ENCODE measurements at regions of chr6 and their contacts with region 1.

Region 1: GRCh38 chr6:13574149-13574570 is 241 bp upstream of the SIRT5 start:
- DNase-seq: peak; percentile 96
- H3K4me3 ChIP-seq: peak overlapping the region; percentile 54 to 88 (median 75)
- H3K27ac ChIP-seq: peak overlapping the region; percentile 80
- H3K4me1 ChIP-seq: peaks cover 8% of the 10 kb centered on the region
- H3K27me3 ChIP-seq: no peaks in the 10 kb centered on the region
- CTCF ChIP-seq: peak in 1 of 2 donors; percentile 40
- POLR2A ChIP-seq: peak; percentile 72

Region 2: GRCh38 chr6:13336553-13336952 is 237.6 kb before region 1 on chr6:
- CTCF ChIA-PET with region 1: interaction called, 36 read pairs
- POLR2A ChIA-PET with region 1: interaction called, 3 read pairs
- dilution Hi-C with region 1: loop called (anchors 25 kb)
- intact Hi-C with region 1: loop called (anchors 1 kb)
- DNase-seq: peak; percentile 85
- H3K4me3 ChIP-seq: no peak overlapping the region
- H3K27ac ChIP-seq: no peak overlapping the region
- H3K4me1 ChIP-seq: peaks cover 13% of the 10 kb centered on the region
- H3K27me3 ChIP-seq: no peaks in the 10 kb centered on the region
- CTCF ChIP-seq: peak; percentile 82 to 85
- POLR2A ChIP-seq: no peak

Region 3: DNA sequence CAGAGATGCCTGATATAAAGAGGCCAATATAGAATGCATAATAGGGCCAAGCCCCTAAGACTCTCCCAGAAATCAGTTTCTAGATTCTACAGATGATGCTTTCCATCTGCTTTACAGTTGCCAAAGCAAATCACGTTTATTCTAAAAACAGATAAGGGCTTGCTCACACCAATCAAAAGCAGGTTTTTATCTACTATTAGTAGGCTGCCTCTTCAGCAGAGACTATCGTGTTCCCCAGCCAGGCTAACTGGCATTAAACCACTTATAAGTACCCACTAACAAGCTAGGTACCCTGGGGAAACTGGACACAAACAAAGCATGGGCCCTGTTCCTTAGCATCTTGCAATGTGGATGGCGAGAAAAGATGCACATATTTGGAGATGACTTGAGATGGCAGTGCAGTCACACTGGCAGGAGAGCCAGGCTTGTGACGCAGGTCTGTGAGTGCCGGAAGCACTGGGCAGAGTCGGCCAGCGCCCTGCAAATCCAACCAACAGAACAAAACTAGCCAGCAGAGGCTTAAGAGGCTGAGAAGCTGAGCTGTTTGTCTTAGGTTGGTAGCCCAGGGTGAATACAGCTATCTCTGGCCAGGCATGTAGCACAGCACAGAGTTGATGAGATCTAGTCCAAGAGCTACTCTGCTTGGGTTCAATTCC is 160.1 kb before region 1 on chr6:
- CTCF ChIA-PET with region 1: interaction called, 13 read pairs
- POLR2A ChIA-PET with region 1: no interaction called
- dilution Hi-C with region 1: no loop called
- intact Hi-C with region 1: no loop called
- DNase-seq: no peak
- H3K4me3 ChIP-seq: no peak overlapping the region
- H3K27ac ChIP-seq: no peak overlapping the region
- H3K4me1 ChIP-seq: peaks cover 4% of the 10 kb centered on the region
- H3K27me3 ChIP-seq: no peaks in the 10 kb centered on the region
- CTCF ChIP-seq: no peak
- POLR2A ChIP-seq: no peak

Region 4: GRCh38 chr6:13538084-13538483 is 36.1 kb before region 1 on chr6:
- CTCF ChIA-PET with region 1: interaction called, 27 read pairs
- POLR2A ChIA-PET with region 1: no interaction called
- dilution Hi-C with region 1: no loop called
- intact Hi-C with region 1: no loop called
- DNase-seq: peak; percentile 68
- H3K4me3 ChIP-seq: no peak overlapping the region
- H3K27ac ChIP-seq: no peak overlapping the region
- H3K4me1 ChIP-seq: peaks cover 9% of the 10 kb centered on the region
- H3K27me3 ChIP-seq: no peaks in the 10 kb centered on the region
- CTCF ChIP-seq: peak; percentile 23 to 25
- POLR2A ChIP-seq: no peak

Region 5: GRCh38 chr6:13593720-13594119 is 19.6 kb after region 1 on chr6:
- CTCF ChIA-PET with region 1: interaction called, 29 read pairs
- POLR2A ChIA-PET with region 1: no interaction called
- dilution Hi-C with region 1: no loop called
- intact Hi-C with region 1: no loop called
- DNase-seq: no peak
- H3K4me3 ChIP-seq: no peak overlapping the region
- H3K27ac ChIP-seq: no peak overlapping the region
- H3K4me1 ChIP-seq: no peaks in the 10 kb centered on the region
- H3K27me3 ChIP-seq: no peaks in the 10 kb centered on the region
- CTCF ChIP-seq: no peak
- POLR2A ChIP-seq: no peak

Region 6: GRCh38 chr6:13778028-13778427 is 203.9 kb after region 1 on chr6:
- CTCF ChIA-PET with region 1: no interaction called
- POLR2A ChIA-PET with region 1: no interaction called
- dilution Hi-C with region 1: no loop called
- intact Hi-C with region 1: no loop called
- DNase-seq: no peak
- H3K4me3 ChIP-seq: no peak overlapping the region
- H3K27ac ChIP-seq: no peak overlapping the region
- H3K4me1 ChIP-seq: no peaks in the 10 kb centered on the region
- H3K27me3 ChIP-seq: no peaks in the 10 kb centered on the region
- CTCF ChIP-seq: no peak
- POLR2A ChIP-seq: no peak